Posterior vena cava (tissue), 2 donors: ENCODE measurements at regions of chr12 and their contacts with region 1.

Region 1: GRCh38 chr12:108004319-108004718 is 124.8 kb upstream of the WSCD2 start:
- DNase-seq: no peak

Region 2: GRCh38 chr12:106692896-106693820 is 1311.2 kb before region 1 on chr12:
- intact Hi-C with region 1: loop called in 1 of 2 experiments (anchors 5 kb)
- DNase-seq: no peak